ENCODE measurements at regions of chr21 and their contacts with region 1.

Region 1: GRCh38 chr21:25568246-25568645 is 39.0 kb downstream of the MRPL39 start:
- DNase-seq: no peak
- H3K4me3 Mint-ChIP-seq: peak overlapping the region; percentile 80
- H3K27ac Mint-ChIP-seq: peak overlapping the region; percentile 94
- H3K4me1 Mint-ChIP-seq: peaks cover 66% of the 10 kb centered on the region
- H3K27me3 Mint-ChIP-seq: no peaks in the 10 kb centered on the region

Region 2: GRCh38 chr21:25405984-25406383 is 162.3 kb before region 1 on chr21:
- CTCF ChIA-PET with region 1: no interaction called
- POLR2A ChIA-PET with region 1: no interaction called
- intact Hi-C with region 1: no loop called
- DNase-seq: no peak
- H3K4me3 Mint-ChIP-seq: no peak overlapping the region
- H3K27ac Mint-ChIP-seq: no peak overlapping the region
- H3K4me1 Mint-ChIP-seq: no peaks in the 10 kb centered on the region
- H3K27me3 Mint-ChIP-seq: peaks cover 1% of the 10 kb centered on the region

Region 3: GRCh38 chr21:25421327-25422028 is 146.8 kb before region 1 on chr21:
- CTCF ChIA-PET with region 1: interaction called, 10 read pairs
- POLR2A ChIA-PET with region 1: interaction called, 67 read pairs
- intact Hi-C with region 1: loop called (anchors 1 kb)
- DNase-seq: peak; percentile 79
- H3K4me3 Mint-ChIP-seq: peak overlapping the region; percentile 67
- H3K27ac Mint-ChIP-seq: peak overlapping the region; percentile 89
- H3K4me1 Mint-ChIP-seq: peaks cover 62% of the 10 kb centered on the region
- H3K27me3 Mint-ChIP-seq: no peaks in the 10 kb centered on the region

Region 4: GRCh38 chr21:25428537-25428936 is 139.7 kb before region 1 on chr21:
- CTCF ChIA-PET with region 1: interaction called, 3 read pairs
- POLR2A ChIA-PET with region 1: interaction called, 67 read pairs
- intact Hi-C with region 1: loop called (anchors 1 kb)
- DNase-seq: no peak
- H3K4me3 Mint-ChIP-seq: no peak overlapping the region
- H3K27ac Mint-ChIP-seq: peak overlapping the region; percentile 13
- H3K4me1 Mint-ChIP-seq: peaks cover 51% of the 10 kb centered on the region
- H3K27me3 Mint-ChIP-seq: no peaks in the 10 kb centered on the region

Region 5: DNA sequence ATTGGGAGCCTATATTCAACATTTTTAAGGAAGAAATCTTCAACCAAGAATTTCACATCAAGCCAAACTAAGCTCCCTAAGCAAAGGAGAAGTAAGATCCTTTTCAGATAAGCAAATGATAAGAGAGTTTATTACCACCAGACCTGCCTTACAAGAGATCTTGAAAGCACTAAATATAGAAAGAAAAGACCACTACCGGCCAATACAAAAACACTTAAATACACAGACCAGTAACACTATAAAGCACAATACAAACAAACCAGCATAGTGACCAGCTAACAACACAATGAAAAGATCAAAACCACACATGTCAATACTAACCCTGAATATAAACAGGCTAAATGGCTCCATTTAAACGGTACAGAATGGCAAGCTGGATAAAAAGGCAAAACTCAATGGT is 126.4 kb before region 1 on chr21:
- CTCF ChIA-PET with region 1: no interaction called
- POLR2A ChIA-PET with region 1: no interaction called
- intact Hi-C with region 1: no loop called
- DNase-seq: no peak
- H3K4me3 Mint-ChIP-seq: no peak overlapping the region
- H3K27ac Mint-ChIP-seq: no peak overlapping the region
- H3K4me1 Mint-ChIP-seq: no peaks in the 10 kb centered on the region
- H3K27me3 Mint-ChIP-seq: no peaks in the 10 kb centered on the region

Region 6: GRCh38 chr21:25589887-25590286 is 21.6 kb after region 1 on chr21:
- CTCF ChIA-PET with region 1: no interaction called
- POLR2A ChIA-PET with region 1: no interaction called
- intact Hi-C with region 1: no loop called
- DNase-seq: no peak
- H3K4me3 Mint-ChIP-seq: no peak overlapping the region
- H3K27ac Mint-ChIP-seq: no peak overlapping the region
- H3K4me1 Mint-ChIP-seq: peaks cover 20% of the 10 kb centered on the region
- H3K27me3 Mint-ChIP-seq: no peaks in the 10 kb centered on the region